CD4-positive, alpha-beta memory T cell (primary cell): ENCODE measurements at regions of chr6 and their contacts with region 1.

Region 1: GRCh38 chr6:96923871-96924493 is 546 bp upstream of the KLHL32 start:
- DNase-seq: peak in 1 of 5 donors; percentile 66
- H3K4me3 ChIP-seq: peak overlapping the region; percentile 45 to 75
- H3K4me3 Mint-ChIP-seq: peak overlapping the region; percentile 89 to 98 (median 96)
- H3K27ac ChIP-seq: peak overlapping the region; percentile 91
- H3K27ac Mint-ChIP-seq: peak overlapping the region; percentile 97 to 100 (median 98)
- H3K4me1 ChIP-seq: peaks cover 30% of the 10 kb centered on the region
- H3K4me1 Mint-ChIP-seq: peaks cover 21 to 49% (median 34%) of the 10 kb centered on the region in 4 donors
- H3K27me3 ChIP-seq: no peaks in the 10 kb centered on the region
- H3K27me3 Mint-ChIP-seq: peaks cover 0 to 2% of the 10 kb centered on the region in 2 donors

Region 2: GRCh38 chr6:95577304-95578105 is 1346.5 kb before region 1 on chr6 and contains the start of gene MANEA:
- CTCF ChIA-PET with region 1: no interaction called
- POLR2A ChIA-PET with region 1: interaction called, 8 read pairs
- intact Hi-C with region 1: loop called (anchors 1 kb)
- DNase-seq: peak; percentile 81 to 87 (median 82)
- H3K4me3 ChIP-seq: peak within 1 kb of the TSS; percentile 90 to 98
- H3K4me3 Mint-ChIP-seq: peak within 1 kb of the TSS; percentile 94 to 98 (median 97)
- H3K27ac ChIP-seq: peak within 1 kb of the TSS; percentile 86
- H3K27ac Mint-ChIP-seq: peak within 1 kb of the TSS; percentile 94 to 99 (median 97)
- H3K4me1 ChIP-seq: peaks cover 54% of the 10 kb centered on the region
- H3K4me1 Mint-ChIP-seq: peaks cover 32 to 70% (median 46%) of the 10 kb centered on the region in 4 donors
- H3K27me3 ChIP-seq: no peaks in the 10 kb centered on the region
- H3K27me3 Mint-ChIP-seq: no peaks in the 10 kb centered on the region
- total RNA-seq, gene MANEA: 12.2 to 13.0 TPM

Region 3: DNA sequence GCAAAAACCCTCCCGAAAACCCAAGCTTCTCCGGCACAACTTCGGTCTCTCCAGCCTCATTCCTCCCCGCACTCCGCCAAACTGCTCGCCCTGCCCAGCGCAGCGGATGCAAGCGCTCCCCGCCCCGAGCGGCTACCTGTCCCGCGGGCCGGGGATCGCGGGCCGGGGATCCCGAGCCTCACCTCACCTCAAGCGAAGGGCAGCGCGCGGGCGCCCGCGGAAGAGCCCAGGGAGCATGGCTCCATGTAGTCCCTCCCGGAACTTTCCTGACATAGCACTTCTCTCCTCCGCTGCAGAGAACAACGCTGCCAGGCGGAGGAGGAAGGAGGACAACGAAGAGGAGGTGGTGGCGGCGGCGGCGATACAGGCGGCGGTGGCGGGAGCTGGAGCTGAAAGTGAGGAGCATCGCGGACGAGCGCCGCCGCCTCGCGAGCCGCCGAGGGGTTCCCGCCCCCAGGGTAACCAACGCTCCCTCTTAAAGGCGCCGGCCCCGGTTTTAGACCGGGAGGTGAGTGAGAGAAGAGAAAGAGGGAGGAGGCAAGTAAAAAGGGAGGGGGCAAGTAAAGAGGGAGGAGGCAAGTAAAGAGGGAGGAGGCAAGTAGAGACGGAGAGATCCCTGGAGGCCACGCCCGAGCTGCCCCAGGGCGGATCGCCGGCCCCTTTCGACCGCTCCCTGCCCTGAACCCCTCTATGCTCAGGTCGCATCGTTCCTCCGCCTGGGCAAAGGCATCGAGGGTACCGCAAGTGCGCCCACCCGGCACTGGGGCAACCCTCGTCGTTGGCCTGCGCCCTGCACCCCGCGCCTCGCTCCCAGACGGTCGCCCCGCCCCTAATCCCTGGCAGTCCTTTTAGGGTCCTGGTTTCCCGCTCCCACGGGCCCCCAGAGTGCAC is 86.7 kb before region 1 on chr6 and contains the start of gene GPR63:
- CTCF ChIA-PET with region 1: no interaction called
- POLR2A ChIA-PET with region 1: interaction called, 14 read pairs
- intact Hi-C with region 1: loop called (anchors 1 kb)
- DNase-seq: peak; percentile 64 to 78 (median 66)
- H3K4me3 ChIP-seq: peak within 1 kb of the TSS; percentile 2 to 69
- H3K4me3 Mint-ChIP-seq: peak within 1 kb of the TSS; percentile 89 to 96 (median 93)
- H3K27ac ChIP-seq: peak within 1 kb of the TSS; percentile 3
- H3K27ac Mint-ChIP-seq: peak within 1 kb of the TSS; percentile 49 to 87 (median 77)
- H3K4me1 ChIP-seq: peaks cover 18% of the 10 kb centered on the region
- H3K4me1 Mint-ChIP-seq: peaks cover 10 to 33% (median 22%) of the 10 kb centered on the region in 4 donors
- H3K27me3 ChIP-seq: no peaks in the 10 kb centered on the region
- H3K27me3 Mint-ChIP-seq: peaks cover 0 to 12% of the 10 kb centered on the region in 2 donors
- total RNA-seq, gene GPR63: 1.9 TPM

Region 4: GRCh38 chr6:96853083-96853482 is 70.9 kb before region 1 on chr6:
- CTCF ChIA-PET with region 1: no interaction called
- POLR2A ChIA-PET with region 1: no interaction called
- intact Hi-C with region 1: no loop called
- DNase-seq: no peak
- H3K4me3 ChIP-seq: no peak overlapping the region
- H3K4me3 Mint-ChIP-seq: no peak overlapping the region
- H3K27ac ChIP-seq: no peak overlapping the region
- H3K27ac Mint-ChIP-seq: no peak overlapping the region
- H3K4me1 ChIP-seq: no peaks in the 10 kb centered on the region
- H3K4me1 Mint-ChIP-seq: no peaks in the 10 kb centered on the region
- H3K27me3 ChIP-seq: no peaks in the 10 kb centered on the region
- H3K27me3 Mint-ChIP-seq: peaks cover 1 to 10% of the 10 kb centered on the region in 2 donors

Region 5: DNA sequence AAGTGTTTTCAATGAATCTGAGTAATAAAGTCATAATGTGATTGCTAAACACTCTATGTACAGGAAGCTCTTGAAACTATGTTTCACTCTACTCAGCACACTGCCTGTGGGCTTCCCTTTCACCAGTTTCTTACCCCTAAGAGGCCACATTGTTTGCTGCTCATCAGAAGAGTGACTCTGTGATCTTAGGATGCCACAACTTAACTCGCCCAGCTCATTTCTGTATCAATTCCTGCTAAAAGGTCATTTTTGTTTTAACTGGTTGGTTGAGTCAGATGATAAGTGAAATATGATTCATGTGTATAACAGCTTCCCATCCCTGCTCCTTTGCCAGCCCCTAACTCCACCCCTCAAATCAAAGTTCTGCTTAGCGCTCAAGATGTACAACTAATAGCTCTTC is 16.5 kb before region 1 on chr6:
- CTCF ChIA-PET with region 1: interaction called, 12 read pairs
- POLR2A ChIA-PET with region 1: interaction called, 4 read pairs
- intact Hi-C with region 1: no loop called
- DNase-seq: no peak
- H3K4me3 ChIP-seq: no peak overlapping the region
- H3K4me3 Mint-ChIP-seq: no peak overlapping the region
- H3K27ac ChIP-seq: no peak overlapping the region
- H3K27ac Mint-ChIP-seq: no peak overlapping the region
- H3K4me1 ChIP-seq: no peaks in the 10 kb centered on the region
- H3K4me1 Mint-ChIP-seq: no peaks in the 10 kb centered on the region
- H3K27me3 ChIP-seq: no peaks in the 10 kb centered on the region
- H3K27me3 Mint-ChIP-seq: peaks cover 11 to 16% of the 10 kb centered on the region in 2 donors

Region 6: GRCh38 chr6:97282726-97283617 is 359.0 kb after region 1 on chr6 and contains the start of gene MMS22L:
- CTCF ChIA-PET with region 1: no interaction called
- POLR2A ChIA-PET with region 1: no interaction called
- intact Hi-C with region 1: loop called (anchors 2 kb)
- DNase-seq: peak; percentile 92 to 93 (median 93)
- H3K4me3 ChIP-seq: peak within 1 kb of the TSS; percentile 73 to 92
- H3K4me3 Mint-ChIP-seq: peak within 1 kb of the TSS; percentile 92 to 98 (median 96)
- H3K27ac ChIP-seq: peak within 1 kb of the TSS; percentile 64
- H3K27ac Mint-ChIP-seq: peak within 1 kb of the TSS; percentile 86 to 96 (median 92)
- H3K4me1 ChIP-seq: peaks cover 22% of the 10 kb centered on the region
- H3K4me1 Mint-ChIP-seq: peaks cover 16 to 37% (median 26%) of the 10 kb centered on the region in 4 donors
- H3K27me3 ChIP-seq: no peaks in the 10 kb centered on the region
- H3K27me3 Mint-ChIP-seq: no peaks in the 10 kb centered on the region
- total RNA-seq, gene MMS22L: 12.4 to 13.2 TPM

Region 7: GRCh38 chr6:97726378-97726777 is 802.4 kb after region 1 on chr6:
- CTCF ChIA-PET with region 1: no interaction called
- POLR2A ChIA-PET with region 1: no interaction called
- intact Hi-C with region 1: no loop called
- DNase-seq: no peak
- H3K4me3 ChIP-seq: no peak overlapping the region
- H3K4me3 Mint-ChIP-seq: no peak overlapping the region
- H3K27ac ChIP-seq: no peak overlapping the region
- H3K27ac Mint-ChIP-seq: no peak overlapping the region
- H3K4me1 ChIP-seq: no peaks in the 10 kb centered on the region
- H3K4me1 Mint-ChIP-seq: no peaks in the 10 kb centered on the region
- H3K27me3 ChIP-seq: no peaks in the 10 kb centered on the region
- H3K27me3 Mint-ChIP-seq: no peaks in the 10 kb centered on the region